OCI-LY7 (cell line): ENCODE measurements at regions of chr10 and their contacts with region 1.

Region 1: GRCh38 chr10:110671788-110672579 is 27.8 kb downstream of the RBM20 start:
- DNase-seq: peak; percentile 90
- H3K4me3 ChIP-seq: peak overlapping the region; percentile 71
- H3K27ac ChIP-seq: peak overlapping the region; percentile 73
- H3K4me1 ChIP-seq: peaks cover 19% of the 10 kb centered on the region
- CTCF ChIP-seq: peak; percentile 98

Region 2: DNA sequence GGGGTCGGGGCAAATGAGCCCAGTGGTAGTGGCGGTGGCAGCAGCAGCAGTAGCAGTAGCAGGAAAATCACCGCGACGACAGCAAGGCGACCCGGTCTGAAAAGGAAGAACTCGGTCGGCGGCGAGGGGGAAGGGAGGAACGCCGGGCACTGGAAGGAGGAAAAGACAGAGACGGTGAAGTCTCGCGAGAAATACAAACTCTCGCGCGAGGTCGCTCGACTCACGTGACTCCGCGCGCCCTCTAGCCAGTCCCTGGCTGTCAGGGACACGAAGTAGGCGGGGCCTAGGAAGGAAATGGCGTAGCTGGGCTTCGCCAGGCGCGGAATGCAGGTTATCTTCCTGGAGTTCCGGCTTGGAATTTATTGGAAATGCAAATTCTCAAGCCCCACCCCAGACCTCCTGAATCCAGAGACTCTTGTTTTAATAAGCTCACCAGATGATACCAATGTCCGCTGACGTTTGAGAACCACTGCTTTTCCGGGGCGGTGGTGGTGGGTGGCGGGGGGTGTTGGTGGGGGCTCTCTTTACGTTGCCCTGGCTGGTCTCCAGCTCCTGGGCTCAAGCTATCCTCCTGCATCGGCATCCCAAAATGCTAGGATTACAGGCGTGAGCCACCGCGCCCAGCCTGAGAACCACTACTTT is 367.1 kb before region 1 on chr10 and contains the start of gene SMNDC1:
- CTCF ChIA-PET with region 1: no interaction called
- POLR2A ChIA-PET with region 1: interaction called, 4 read pairs
- intact Hi-C with region 1: loop called (anchors 5 kb)
- DNase-seq: peak; percentile 99
- H3K4me3 ChIP-seq: peak within 1 kb of the TSS; percentile 99
- H3K27ac ChIP-seq: peak within 1 kb of the TSS; percentile 69
- H3K4me1 ChIP-seq: peaks cover 49% of the 10 kb centered on the region
- CTCF ChIP-seq: no peak
- total RNA-seq, gene SMNDC1: 8.1 and 10.0 TPM in 2 replicates

Region 3: DNA sequence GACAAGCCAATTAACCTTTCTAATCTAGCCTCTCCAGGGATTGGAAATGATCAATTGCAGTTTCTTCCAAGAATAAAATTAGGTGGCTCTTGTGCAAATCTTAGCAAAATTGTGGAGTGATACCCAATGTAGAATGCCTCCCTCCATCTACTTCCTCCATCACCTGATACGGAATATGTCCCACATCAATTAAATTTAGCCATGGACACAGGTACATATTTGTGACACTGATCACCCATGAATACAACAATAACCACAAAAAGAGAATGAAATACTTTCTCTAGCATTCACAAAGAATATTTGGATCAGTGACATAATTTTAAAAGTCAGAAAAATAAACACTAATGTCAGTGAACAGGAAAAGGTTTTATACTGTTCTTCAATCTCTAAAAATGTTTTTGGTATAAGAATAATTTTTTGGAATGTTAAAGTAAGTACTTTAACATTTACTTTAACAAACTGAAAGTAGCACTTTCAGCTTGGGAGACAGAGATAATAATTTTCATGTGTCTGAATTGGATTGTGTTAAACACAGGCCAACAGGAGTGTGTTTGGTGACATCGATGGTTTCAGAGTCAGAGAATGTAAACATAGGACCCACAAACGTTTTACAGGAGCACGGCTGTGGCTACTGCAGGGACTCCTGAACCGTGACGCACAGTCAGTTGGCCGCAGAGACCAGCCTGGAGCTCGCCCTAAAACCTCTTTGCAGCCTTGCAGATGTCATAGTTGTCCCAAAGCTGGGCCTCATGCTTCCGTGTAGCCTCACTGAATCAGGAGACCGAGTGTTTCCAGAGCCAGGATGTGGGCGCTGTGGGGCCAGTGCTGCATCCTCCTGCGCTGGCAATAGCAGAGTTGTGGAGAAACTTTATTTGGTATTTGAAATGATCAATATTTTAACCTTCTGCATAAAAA is 20.7 kb before region 1 on chr10:
- CTCF ChIA-PET with region 1: no interaction called
- POLR2A ChIA-PET with region 1: interaction called, 5 read pairs
- intact Hi-C with region 1: loop called (anchors 1 kb)
- DNase-seq: peak; percentile 71
- H3K4me3 ChIP-seq: peak overlapping the region; percentile 43
- H3K27ac ChIP-seq: peak overlapping the region; percentile 85
- H3K4me1 ChIP-seq: peaks cover 80% of the 10 kb centered on the region
- CTCF ChIP-seq: no peak; the same call in 1 of the 2 replicates